ENCODE measurements at regions of chr9 and their contacts with region 1.

Region 1: DNA sequence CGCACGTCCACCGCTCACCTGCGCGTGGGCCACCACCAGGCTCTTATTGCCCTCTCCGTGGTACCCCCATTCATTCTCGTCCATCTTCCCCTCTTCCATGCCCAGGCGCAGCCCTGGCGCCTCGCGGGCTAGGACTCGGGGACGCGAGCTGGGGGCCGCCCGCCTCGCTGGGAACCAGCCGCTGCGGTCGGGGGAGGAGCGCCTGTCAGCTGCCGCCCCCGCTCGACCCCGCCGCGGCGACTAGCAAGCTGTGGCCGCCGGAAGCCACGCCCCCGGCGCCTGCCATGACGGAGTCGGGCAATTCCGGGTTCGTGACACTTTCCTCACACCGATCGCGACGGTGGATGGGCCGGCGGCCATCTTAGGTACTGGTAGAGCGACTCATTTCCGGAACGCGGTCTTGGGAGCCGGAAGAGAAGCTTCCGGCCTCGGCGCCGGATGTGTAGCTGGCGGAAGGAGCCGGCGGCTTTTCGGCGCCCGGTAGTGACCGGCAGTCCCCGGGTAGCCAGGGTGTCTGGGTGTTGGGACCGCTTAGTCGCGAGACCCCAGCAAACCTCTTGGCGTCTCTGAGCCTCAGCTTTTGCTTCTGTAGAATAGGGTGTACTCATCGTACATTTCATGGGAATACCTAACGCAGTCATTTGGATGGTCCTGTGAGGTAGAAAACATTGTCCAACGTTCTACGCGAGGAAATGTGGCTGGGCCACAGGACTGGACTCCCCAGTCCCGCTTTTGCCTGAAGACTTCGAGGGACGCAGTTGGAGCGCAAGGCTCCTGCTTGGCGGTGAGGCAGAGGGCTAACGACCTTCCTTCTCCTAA is at the start of gene IPPK:
- DNase-seq: peak; percentile 95 to 98 (median 97)
- H3K4me3 ChIP-seq: peak within 1 kb of the TSS; percentile 89 to 90
- H3K4me3 Mint-ChIP-seq: peak within 1 kb of the TSS; percentile 94 to 99 (median 96)
- H3K27ac ChIP-seq: peak within 1 kb of the TSS; percentile 97
- H3K27ac Mint-ChIP-seq: peak within 1 kb of the TSS; percentile 97 to 99 (median 98)
- H3K4me1 ChIP-seq: peaks cover 29% of the 10 kb centered on the region
- H3K4me1 Mint-ChIP-seq: peaks cover 24 to 45% (median 35%) of the 10 kb centered on the region in 4 donors
- H3K27me3 ChIP-seq: no peaks in the 10 kb centered on the region
- H3K27me3 Mint-ChIP-seq: no peaks in the 10 kb centered on the region
- total RNA-seq, gene IPPK: 7.2 to 7.9 TPM

Region 2: DNA sequence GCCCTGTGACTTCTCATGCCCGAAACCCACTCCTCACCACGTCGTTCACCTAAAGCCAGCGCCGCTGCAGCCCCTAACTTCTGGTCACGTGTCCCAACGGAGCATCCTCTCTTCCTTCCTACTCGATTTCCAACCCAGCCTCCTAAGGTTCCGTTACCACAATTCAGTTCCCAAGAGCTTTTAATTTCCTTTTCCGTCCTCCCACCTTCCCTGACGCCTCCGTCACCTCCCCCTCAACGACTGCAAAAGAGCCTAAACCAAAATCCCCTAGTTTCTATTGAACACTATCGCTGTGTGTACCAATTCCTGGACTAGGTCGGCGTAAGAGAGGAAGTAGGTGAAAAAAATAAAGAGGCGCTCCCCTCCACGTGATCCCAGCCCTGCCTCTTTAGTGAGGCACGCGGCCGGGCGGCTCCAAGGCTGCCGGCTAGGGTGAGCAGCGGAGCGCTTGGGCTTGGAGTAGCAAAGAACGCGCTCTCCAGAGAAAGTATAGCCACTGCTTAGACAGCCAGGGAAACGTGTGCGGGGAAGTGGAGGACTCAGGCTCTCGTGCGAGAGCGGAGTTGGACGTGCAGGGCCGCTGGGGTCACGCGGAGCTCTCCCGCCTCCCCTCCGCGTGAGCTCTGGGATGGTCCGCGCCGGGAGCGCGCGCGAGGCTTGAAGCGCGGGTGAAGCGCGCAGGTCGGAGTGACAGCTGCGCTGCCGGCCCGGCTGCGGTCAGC is 344.7 kb before region 1 on chr9 and contains the starts of genes CENPP and NOL8:
- CTCF ChIA-PET with region 1: interaction called, 5 read pairs
- POLR2A ChIA-PET with region 1: interaction called, 30 read pairs
- intact Hi-C with region 1: loop called (anchors 1 kb)
- DNase-seq: peak; percentile 89 to 91 (median 91)
- H3K4me3 ChIP-seq: peak within 1 kb of the TSS; percentile 97 to 100
- H3K4me3 Mint-ChIP-seq: peak within 1 kb of the TSS; percentile 95 to 99 (median 98)
- H3K27ac ChIP-seq: peak within 1 kb of the TSS; percentile 92
- H3K27ac Mint-ChIP-seq: peak within 1 kb of the TSS; percentile 91 to 100 (median 99)
- H3K4me1 ChIP-seq: peaks cover 26% of the 10 kb centered on the region
- H3K4me1 Mint-ChIP-seq: peaks cover 8 to 41% (median 30%) of the 10 kb centered on the region in 4 donors
- H3K27me3 ChIP-seq: no peaks in the 10 kb centered on the region
- H3K27me3 Mint-ChIP-seq: no peaks in the 10 kb centered on the region
- total RNA-seq, gene CENPP: 0.55 to 4.3 TPM
- total RNA-seq, gene NOL8: 93.9 to 104 TPM

Region 3: DNA sequence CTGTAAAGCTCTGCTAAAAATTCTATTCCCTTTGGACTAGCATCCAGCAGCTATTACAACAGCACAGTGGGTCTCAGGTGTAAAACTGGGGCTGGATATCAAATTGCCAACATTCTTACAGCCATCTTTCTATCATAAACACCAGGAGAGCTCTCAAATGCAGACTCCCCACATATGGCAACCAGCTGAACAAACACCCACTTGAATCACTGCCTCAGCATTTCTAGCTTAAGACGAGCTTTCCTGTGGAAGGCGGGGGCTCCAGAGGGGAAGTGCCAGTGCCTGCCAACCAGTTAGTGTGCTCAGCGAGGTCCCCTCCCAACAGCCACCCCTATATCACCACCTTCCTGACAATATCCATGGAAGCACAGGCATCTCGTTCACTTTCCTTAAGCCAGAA is 62.3 kb before region 1 on chr9:
- CTCF ChIA-PET with region 1: no interaction called
- POLR2A ChIA-PET with region 1: no interaction called
- intact Hi-C with region 1: no loop called
- DNase-seq: no peak
- H3K4me3 ChIP-seq: no peak overlapping the region
- H3K4me3 Mint-ChIP-seq: no peak overlapping the region
- H3K27ac ChIP-seq: no peak overlapping the region
- H3K27ac Mint-ChIP-seq: no peak overlapping the region
- H3K4me1 ChIP-seq: no peaks in the 10 kb centered on the region
- H3K4me1 Mint-ChIP-seq: no peaks in the 10 kb centered on the region
- H3K27me3 ChIP-seq: no peaks in the 10 kb centered on the region
- H3K27me3 Mint-ChIP-seq: no peaks in the 10 kb centered on the region

Region 4: DNA sequence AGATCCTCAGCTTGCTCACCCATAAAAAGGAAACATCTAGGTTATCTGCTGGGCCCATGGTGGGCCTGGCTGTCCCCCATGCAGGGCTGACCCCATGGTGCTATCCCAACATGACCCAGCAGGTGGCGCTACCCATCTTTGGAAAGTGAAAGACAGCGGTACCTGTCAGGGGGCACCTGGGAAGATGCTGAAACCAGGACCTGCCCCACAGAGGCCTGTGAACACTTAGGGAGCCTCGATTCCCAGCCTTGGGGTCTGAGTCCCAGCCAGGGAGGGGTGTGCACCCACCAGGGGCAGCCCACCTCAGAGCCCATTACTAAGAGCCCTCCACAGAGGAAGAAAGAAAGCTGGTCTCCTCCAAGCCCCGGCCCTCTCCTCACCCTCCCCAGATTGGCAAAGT is 46.5 kb after region 1 on chr9:
- CTCF ChIA-PET with region 1: interaction called, 22 read pairs
- POLR2A ChIA-PET with region 1: interaction called, 18 read pairs
- intact Hi-C with region 1: loop called (anchors 1 kb)
- DNase-seq: peak; percentile 60 to 76 (median 72)
- H3K4me3 ChIP-seq: no peak overlapping the region
- H3K4me3 Mint-ChIP-seq: no peak overlapping the region
- H3K27ac ChIP-seq: no peak overlapping the region
- H3K27ac Mint-ChIP-seq: peak overlapping the region; percentile 15 to 74 (median 48)
- H3K4me1 ChIP-seq: peaks cover 19% of the 10 kb centered on the region
- H3K4me1 Mint-ChIP-seq: peaks cover 15 to 29% (median 17%) of the 10 kb centered on the region in 4 donors
- H3K27me3 ChIP-seq: no peaks in the 10 kb centered on the region
- H3K27me3 Mint-ChIP-seq: no peaks in the 10 kb centered on the region

Region 5: GRCh38 chr9:92728831-92729734 is 59.0 kb after region 1 on chr9:
- CTCF ChIA-PET with region 1: no interaction called
- POLR2A ChIA-PET with region 1: no interaction called
- intact Hi-C with region 1: no loop called
- DNase-seq: no peak
- H3K4me3 ChIP-seq: no peak overlapping the region
- H3K4me3 Mint-ChIP-seq: no peak overlapping the region
- H3K27ac ChIP-seq: no peak overlapping the region
- H3K27ac Mint-ChIP-seq: peak overlapping the region in 2 of 7 donors; percentile 64 to 73
- H3K4me1 ChIP-seq: no peaks in the 10 kb centered on the region
- H3K4me1 Mint-ChIP-seq: peaks cover 11 to 20% (median 15%) of the 10 kb centered on the region in 4 donors
- H3K27me3 ChIP-seq: no peaks in the 10 kb centered on the region
- H3K27me3 Mint-ChIP-seq: no peaks in the 10 kb centered on the region

Region 6: GRCh38 chr9:92877531-92878430 is 207.7 kb after region 1 on chr9 and contains the start of gene ZNF484:
- CTCF ChIA-PET with region 1: no interaction called
- POLR2A ChIA-PET with region 1: interaction called, 4 read pairs
- intact Hi-C with region 1: loop called (anchors 1 kb)
- DNase-seq: peak; percentile 94 to 97 (median 95)
- H3K4me3 ChIP-seq: peak within 1 kb of the TSS; percentile 81 to 97
- H3K4me3 Mint-ChIP-seq: peak within 1 kb of the TSS; percentile 87 to 100 (median 99)
- H3K27ac ChIP-seq: peak within 1 kb of the TSS; percentile 94
- H3K27ac Mint-ChIP-seq: peak within 1 kb of the TSS; percentile 96 to 100 (median 99)
- H3K4me1 ChIP-seq: peaks cover 35% of the 10 kb centered on the region
- H3K4me1 Mint-ChIP-seq: peaks cover 30 to 48% (median 40%) of the 10 kb centered on the region in 4 donors
- H3K27me3 ChIP-seq: no peaks in the 10 kb centered on the region
- H3K27me3 Mint-ChIP-seq: no peaks in the 10 kb centered on the region
- total RNA-seq, gene ZNF484: 22.6 to 24.7 TPM

Region 7: GRCh38 chr9:94166237-94166963 is 1496.3 kb after region 1 on chr9:
- CTCF ChIA-PET with region 1: no interaction called
- POLR2A ChIA-PET with region 1: no interaction called
- intact Hi-C with region 1: loop called (anchors 10 kb)
- DNase-seq: peak; percentile 93 to 96 (median 94)
- H3K4me3 ChIP-seq: peak overlapping the region in 1 of 2 donors; percentile 80
- H3K4me3 Mint-ChIP-seq: peak overlapping the region; percentile 79 to 98 (median 90)
- H3K27ac ChIP-seq: peak overlapping the region; percentile 98
- H3K27ac Mint-ChIP-seq: peak overlapping the region; percentile 90 to 96 (median 95)
- H3K4me1 ChIP-seq: peaks cover 48% of the 10 kb centered on the region
- H3K4me1 Mint-ChIP-seq: peaks cover 34 to 64% (median 45%) of the 10 kb centered on the region in 4 donors
- H3K27me3 ChIP-seq: no peaks in the 10 kb centered on the region
- H3K27me3 Mint-ChIP-seq: no peaks in the 10 kb centered on the region